Activated CD4-positive, alpha-beta T cell treated with anti-CD3 and anti-CD28 coated beads for 36 hours (primary cell): ENCODE measurements at regions of chr1 and their contacts with region 1.

Region 1: GRCh38 chr1:107936498-107937481 is 28.2 kb downstream of the VAV3 start:
- DNase-seq: peak; percentile 71
- ATAC-seq: peak; percentile 56
- H3K4me3 Mint-ChIP-seq: no peak overlapping the region
- H3K27ac Mint-ChIP-seq: peak overlapping the region; percentile 80
- H3K4me1 Mint-ChIP-seq: peaks cover 66% of the 10 kb centered on the region
- H3K27me3 Mint-ChIP-seq: no peaks in the 10 kb centered on the region

Region 2: GRCh38 chr1:107760065-107760464 is 176.7 kb before region 1 on chr1:
- CTCF ChIA-PET with region 1: no interaction called
- POLR2A ChIA-PET with region 1: no interaction called
- intact Hi-C with region 1: no loop called
- DNase-seq: no peak
- ATAC-seq: no peak
- H3K4me3 Mint-ChIP-seq: no peak overlapping the region
- H3K27ac Mint-ChIP-seq: no peak overlapping the region
- H3K4me1 Mint-ChIP-seq: no peaks in the 10 kb centered on the region
- H3K27me3 Mint-ChIP-seq: no peaks in the 10 kb centered on the region

Region 3: DNA sequence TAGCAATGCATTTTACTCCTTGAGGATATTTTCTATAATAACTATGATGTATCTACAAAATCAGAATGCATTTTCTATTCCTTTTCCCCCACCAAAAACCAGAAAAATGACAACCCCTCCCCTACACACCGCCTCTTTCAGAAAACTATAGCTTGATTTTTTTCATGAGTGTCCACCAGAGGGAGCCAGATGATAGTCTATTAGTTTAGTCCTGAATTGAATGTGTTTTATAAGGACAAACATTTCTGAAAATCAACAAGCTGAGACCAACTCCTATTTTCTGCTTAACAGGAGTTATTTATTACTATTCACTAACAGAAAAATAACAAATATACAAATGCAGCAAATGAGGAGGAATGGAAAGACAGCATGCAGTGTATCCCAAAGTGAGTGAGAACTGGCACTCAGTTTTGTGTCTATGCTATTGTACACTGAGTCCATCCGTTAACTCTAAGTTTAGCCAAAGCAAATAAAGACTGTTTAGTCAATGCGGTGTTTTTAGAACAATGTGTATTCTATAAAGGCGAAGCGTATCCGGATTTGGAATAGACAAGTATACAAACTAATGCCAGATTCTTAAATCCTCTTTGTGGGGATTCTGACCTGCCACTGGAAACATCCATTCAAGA is 154.5 kb before region 1 on chr1:
- CTCF ChIA-PET with region 1: interaction called, 4 read pairs
- POLR2A ChIA-PET with region 1: no interaction called
- intact Hi-C with region 1: loop called in 1 of 2 experiments (anchors 5 kb)
- DNase-seq: peak; percentile 35
- ATAC-seq: peak; percentile 45
- H3K4me3 Mint-ChIP-seq: no peak overlapping the region
- H3K27ac Mint-ChIP-seq: no peak overlapping the region
- H3K4me1 Mint-ChIP-seq: peaks cover 26% of the 10 kb centered on the region
- H3K27me3 Mint-ChIP-seq: no peaks in the 10 kb centered on the region

Region 4: DNA sequence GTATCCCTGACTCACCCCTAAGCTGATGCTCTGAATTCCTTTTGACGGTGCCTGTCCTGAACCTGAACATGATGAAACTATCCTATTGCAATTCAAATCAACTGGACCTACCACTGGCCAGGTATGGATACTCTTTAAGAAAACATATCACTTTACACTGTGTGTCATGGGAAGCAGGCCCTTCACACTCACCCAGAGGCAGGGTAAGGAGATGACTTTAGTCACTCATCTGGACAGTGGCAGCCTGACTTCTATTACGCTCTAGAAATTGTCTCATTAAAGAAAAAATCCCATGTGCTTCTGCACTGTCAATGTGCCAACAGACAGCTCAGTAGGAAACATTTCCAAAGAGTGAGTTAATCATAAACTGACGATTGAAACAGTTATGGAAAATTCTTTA is 66.1 kb before region 1 on chr1:
- CTCF ChIA-PET with region 1: no interaction called
- POLR2A ChIA-PET with region 1: no interaction called
- intact Hi-C with region 1: loop called in 1 of 2 experiments (anchors 2 kb)
- DNase-seq: no peak
- ATAC-seq: no peak
- H3K4me3 Mint-ChIP-seq: no peak overlapping the region
- H3K27ac Mint-ChIP-seq: no peak overlapping the region
- H3K4me1 Mint-ChIP-seq: peaks cover 29% of the 10 kb centered on the region
- H3K27me3 Mint-ChIP-seq: no peaks in the 10 kb centered on the region

Region 5: DNA sequence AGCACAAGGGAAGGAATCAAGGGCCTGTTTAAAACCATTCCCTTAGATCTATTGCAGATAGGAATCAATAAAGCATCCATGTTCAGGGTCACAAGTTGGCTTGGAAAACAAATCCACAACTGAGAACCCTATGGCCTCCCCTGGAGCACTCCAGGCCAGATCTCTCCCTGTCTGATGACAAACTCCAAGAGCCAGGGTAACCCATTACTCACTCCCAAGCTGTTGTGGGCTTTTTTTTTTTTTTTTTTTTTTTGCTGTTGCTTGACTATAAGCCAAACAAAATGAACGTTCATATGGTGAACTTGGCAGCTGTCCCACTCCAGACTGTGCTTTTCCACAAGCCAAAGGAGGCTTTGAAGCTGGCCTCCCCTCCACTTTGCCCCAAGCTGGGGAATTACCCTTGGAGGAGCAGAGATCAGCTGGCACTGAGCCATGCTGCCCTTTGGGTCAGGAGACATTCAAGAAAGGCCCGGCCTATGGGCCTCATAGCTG is 63.9 kb after region 1 on chr1:
- CTCF ChIA-PET with region 1: no interaction called
- POLR2A ChIA-PET with region 1: no interaction called
- intact Hi-C with region 1: no loop called
- DNase-seq: no peak
- ATAC-seq: no peak
- H3K4me3 Mint-ChIP-seq: no peak overlapping the region
- H3K27ac Mint-ChIP-seq: no peak overlapping the region
- H3K4me1 Mint-ChIP-seq: no peaks in the 10 kb centered on the region
- H3K27me3 Mint-ChIP-seq: no peaks in the 10 kb centered on the region

Region 6: DNA sequence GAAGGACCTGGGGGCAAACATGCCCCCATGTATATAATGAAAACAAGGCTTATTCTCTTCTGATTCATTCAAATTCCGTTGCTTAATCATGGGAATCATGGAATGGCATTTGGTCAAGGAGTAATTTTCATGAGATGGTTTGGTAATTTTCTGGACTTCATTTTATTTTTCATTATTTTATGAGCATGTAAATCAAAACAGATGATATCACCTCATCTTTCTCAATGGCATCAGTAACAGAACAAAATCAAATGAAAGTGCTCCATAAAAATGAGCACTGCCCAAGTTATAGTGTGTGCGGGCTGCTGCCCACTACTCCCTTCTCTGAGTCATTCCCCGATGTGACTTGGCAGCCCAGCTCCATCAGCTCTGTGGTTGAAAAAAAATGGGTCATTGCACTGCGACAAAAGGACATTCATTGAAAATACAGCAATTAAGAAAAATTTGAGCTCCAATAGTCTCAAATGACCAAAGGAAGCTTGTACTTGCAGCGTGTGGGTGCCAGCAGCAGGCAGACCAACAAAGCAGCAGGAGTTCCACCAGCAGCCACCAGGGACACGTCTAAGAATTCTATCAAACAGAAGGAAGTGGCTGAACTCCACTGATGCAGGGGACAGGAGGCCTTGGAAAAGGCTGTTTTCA is 112.5 kb after region 1 on chr1:
- CTCF ChIA-PET with region 1: no interaction called
- POLR2A ChIA-PET with region 1: interaction called, 3 read pairs
- intact Hi-C with region 1: loop called in 1 of 2 experiments (anchors 5 kb)
- DNase-seq: peak; percentile 51
- ATAC-seq: no peak
- H3K4me3 Mint-ChIP-seq: no peak overlapping the region
- H3K27ac Mint-ChIP-seq: no peak overlapping the region
- H3K4me1 Mint-ChIP-seq: peaks cover 20% of the 10 kb centered on the region
- H3K27me3 Mint-ChIP-seq: no peaks in the 10 kb centered on the region

Region 7: GRCh38 chr1:108199781-108200570 is 263.2 kb after region 1 on chr1 and contains the start of gene SLC25A24:
- CTCF ChIA-PET with region 1: no interaction called
- POLR2A ChIA-PET with region 1: no interaction called
- intact Hi-C with region 1: no loop called
- DNase-seq: peak; percentile 86
- ATAC-seq: peak; percentile 97
- H3K4me3 Mint-ChIP-seq: peak within 1 kb of the TSS; percentile 84
- H3K27ac Mint-ChIP-seq: peak within 1 kb of the TSS; percentile 78
- H3K4me1 Mint-ChIP-seq: peaks cover 26% of the 10 kb centered on the region
- H3K27me3 Mint-ChIP-seq: no peaks in the 10 kb centered on the region
- total RNA-seq, gene SLC25A24: 13.6 to 15.4 TPM

Region 8: GRCh38 chr1:108643492-108644335 is 706.9 kb after region 1 on chr1:
- CTCF ChIA-PET with region 1: no interaction called
- POLR2A ChIA-PET with region 1: no interaction called
- intact Hi-C with region 1: loop called in 1 of 2 experiments (anchors 10 kb)
- DNase-seq: peak; percentile 64
- ATAC-seq: peak; percentile 47
- H3K4me3 Mint-ChIP-seq: no peak overlapping the region
- H3K27ac Mint-ChIP-seq: peak overlapping the region; percentile 72
- H3K4me1 Mint-ChIP-seq: peaks cover 71% of the 10 kb centered on the region
- H3K27me3 Mint-ChIP-seq: no peaks in the 10 kb centered on the region